A673 (cell line): ENCODE measurements at regions of chr14 and their contacts with region 1.

Region 1: DNA sequence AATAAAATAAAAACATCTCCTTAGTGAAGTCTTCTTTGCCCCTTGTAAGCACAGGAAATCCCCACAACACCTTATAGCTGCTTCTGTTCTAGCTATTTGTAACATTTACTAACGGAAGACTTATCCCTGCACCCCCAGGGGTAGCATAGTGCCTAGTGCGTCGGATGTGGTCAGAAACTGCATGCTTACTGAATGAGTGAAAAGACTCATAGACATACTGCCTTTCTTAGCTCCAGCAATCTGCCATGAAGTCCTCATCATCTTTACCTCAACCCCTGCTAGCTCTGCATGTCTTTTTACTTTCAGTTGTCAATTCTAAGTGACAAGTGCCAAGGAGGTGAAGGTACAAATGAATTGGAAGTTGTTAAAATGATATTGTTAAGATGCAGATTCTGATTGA is 12.9 kb downstream of the RIOX1 start:
- DNase-seq: no peak
- H3K4me3 ChIP-seq: no peak overlapping the region
- H3K27ac ChIP-seq: no peak overlapping the region
- H3K4me1 ChIP-seq: no peaks in the 10 kb centered on the region
- H3K27me3 ChIP-seq: no peaks in the 10 kb centered on the region
- CTCF ChIP-seq: no peak

Region 2: GRCh38 chr14:73568381-73568781 is 64.7 kb after region 1 on chr14:
- CTCF ChIA-PET with region 1: interaction called, 14 read pairs
- POLR2A ChIA-PET with region 1: no interaction called
- intact Hi-C with region 1: no loop called
- DNase-seq: no peak
- H3K4me3 ChIP-seq: peak overlapping the region; percentile 51
- H3K27ac ChIP-seq: peak overlapping the region; percentile 79
- H3K4me1 ChIP-seq: peaks cover 7% of the 10 kb centered on the region
- H3K27me3 ChIP-seq: no peaks in the 10 kb centered on the region
- CTCF ChIP-seq: no peak

Region 3: DNA sequence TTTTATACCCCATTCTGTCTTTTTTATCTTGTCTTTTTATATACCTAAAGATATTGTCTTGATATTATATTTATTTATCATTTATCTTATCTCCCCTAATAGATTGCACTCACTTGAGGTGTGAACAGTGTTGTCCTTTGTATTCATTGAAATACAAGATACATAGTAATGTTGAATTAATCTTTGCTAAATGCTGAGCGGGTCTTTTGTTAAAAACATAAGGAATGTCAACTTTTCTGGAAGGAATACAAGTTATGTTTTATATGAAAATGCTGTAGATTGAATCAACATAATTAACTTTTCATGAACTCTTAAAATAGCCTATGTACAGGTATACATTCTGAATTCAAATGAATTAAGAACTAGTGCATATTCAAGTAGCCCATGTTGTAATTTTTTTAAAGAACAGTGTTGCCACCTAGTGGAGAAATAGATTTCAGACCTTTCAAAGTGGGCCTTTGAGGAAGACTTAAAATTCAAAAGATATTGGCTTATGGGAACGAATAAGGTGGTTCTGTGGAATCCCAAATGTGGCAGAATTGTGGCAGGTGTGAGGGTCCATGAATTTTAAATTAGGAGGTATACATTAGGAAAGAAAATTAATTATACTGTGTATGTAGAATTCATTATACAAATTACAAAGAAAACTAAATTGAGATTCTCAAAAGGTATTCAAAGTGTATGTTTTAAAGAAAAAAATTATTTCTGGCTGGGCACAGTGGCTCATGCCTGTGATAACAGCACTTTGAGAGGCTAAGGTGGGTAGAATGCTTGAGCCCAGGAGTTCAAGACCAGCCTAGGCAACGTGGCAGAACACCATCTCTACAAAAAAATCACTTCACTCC is 534.6 kb after region 1 on chr14:
- CTCF ChIA-PET with region 1: no interaction called
- POLR2A ChIA-PET with region 1: no interaction called
- intact Hi-C with region 1: loop called (anchors 5 kb)
- DNase-seq: peak; percentile 79
- H3K4me3 ChIP-seq: no peak overlapping the region
- H3K27ac ChIP-seq: no peak overlapping the region
- H3K4me1 ChIP-seq: no peaks in the 10 kb centered on the region
- H3K27me3 ChIP-seq: no peaks in the 10 kb centered on the region
- CTCF ChIP-seq: peak; percentile 75